Cardiac septum (tissue), 1 donor: ENCODE measurements at regions of chr13 and their contacts with region 1.

Region 1: GRCh38 chr13:32117701-32118100 is 86.1 kb downstream of the FRY start:
- DNase-seq: peak; percentile 83

Region 2: DNA sequence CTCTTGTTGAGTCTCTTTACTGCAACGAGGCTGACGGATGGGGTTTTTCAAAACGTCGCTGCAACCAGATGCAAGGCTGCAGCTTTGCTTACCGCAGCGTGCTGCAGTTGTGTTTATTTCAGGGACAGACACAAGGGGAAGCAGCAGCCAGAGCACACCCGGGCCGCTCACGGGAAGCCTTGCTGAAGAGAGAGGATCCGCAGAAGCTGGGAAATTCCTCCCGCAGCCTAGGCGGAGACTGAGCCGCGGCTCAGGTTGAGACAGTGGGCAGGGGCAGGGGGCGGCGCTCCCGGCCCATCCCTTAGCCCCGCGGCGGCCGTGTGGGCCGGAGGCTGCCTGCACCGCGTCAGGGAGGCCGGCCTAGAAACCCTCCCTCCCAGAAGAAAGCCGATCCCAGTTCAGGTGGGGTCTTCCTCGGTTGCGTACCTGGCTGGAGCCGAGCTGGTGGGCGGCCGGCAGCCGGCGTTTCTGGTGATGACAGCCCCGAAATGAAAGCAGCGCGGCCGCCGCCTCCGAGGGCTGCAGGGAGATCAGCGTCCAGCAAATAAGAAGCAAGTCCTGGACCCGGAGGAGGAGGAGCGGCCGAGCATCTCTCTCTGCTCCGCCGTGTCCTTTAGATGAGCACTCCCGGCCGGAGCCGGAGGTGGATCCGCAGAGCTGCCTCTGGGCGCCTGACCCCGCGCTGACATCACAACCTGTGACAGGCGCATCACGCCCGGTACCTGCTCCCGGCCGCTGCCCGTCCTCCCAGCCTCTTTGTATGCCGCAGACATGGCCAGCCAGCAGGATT is 86.5 kb before region 1 on chr13 and contains the start of gene FRY:
- intact Hi-C with region 1: loop called (anchors 5 kb)
- DNase-seq: peak; percentile 94
- total RNA-seq, gene FRY: 202 TPM

Region 3: DNA sequence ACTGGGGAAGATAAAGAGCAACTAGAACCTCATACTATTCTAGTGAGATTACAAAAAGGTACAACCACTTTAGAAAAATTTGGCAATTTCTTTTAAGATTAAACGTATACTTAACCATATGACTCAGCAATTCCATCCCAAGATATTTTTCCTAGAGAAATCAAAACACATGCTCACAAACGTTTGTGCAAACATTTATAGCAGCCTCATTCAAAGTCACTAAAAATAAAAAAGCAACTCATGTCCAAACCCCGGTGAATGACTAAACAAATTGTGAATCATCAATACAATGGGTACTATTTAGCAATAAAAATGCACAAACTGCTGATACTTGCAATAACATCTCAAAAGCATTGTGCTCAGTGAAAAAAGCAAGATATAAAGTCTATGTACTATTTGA is 35.4 kb after region 1 on chr13:
- intact Hi-C with region 1: loop called (anchors 2 kb)
- DNase-seq: no peak